ENCODE measurements at regions of chr7 and their contacts with region 1.

Region 1: DNA sequence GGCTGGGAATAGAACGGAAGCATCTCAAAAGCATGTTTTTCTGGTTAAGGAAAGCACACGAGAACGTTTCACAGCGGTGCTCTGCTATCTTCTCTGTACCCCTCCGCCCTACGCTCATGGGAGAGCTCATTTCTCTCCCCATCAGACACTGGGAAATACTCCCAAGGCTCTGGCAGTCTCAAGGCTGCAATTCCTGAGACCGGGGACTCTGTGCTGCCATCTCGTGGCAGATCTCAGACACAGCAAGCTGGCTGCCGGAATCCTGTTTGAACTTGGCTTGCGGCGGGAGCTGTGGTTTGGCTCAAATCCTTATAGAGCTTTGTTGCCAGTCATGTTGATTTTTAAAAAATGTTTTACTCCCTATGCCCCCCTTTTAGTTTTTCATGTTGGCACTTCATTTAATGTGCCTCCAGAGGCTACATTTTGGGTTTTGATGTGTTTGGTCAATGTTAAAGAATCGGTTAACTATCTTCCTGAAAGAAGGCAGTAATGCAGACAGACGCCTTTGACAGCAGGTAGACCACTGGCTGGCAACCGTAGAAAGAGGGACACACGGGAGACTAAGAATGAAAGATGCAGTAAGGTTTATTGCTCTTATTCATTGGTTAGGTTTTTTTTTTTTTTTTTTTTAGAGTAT is 27.6 kb downstream of the BMPER start:
- DNase-seq: peak; percentile 66 to 76
- ATAC-seq: peak; percentile 89 to 90
- H3K4me3 ChIP-seq: peak overlapping the region; percentile 11 to 44 (median 34)
- H3K27ac ChIP-seq: peak overlapping the region; percentile 5 to 54 (median 17)
- H3K4me1 ChIP-seq: peaks cover 10 to 11% of the 10 kb centered on the region in 2 donors
- H3K27me3 ChIP-seq: no peaks in the 10 kb centered on the region
- CTCF ChIP-seq: peak; percentile 76 to 97 (median 86)
- POLR2A ChIP-seq: no peak

Region 2: GRCh38 chr7:33243319-33243881 is 689.5 kb before region 1 on chr7:
- in situ Hi-C with region 1: loop called in 3 of 4 experiments (anchors 25 kb)
- intact Hi-C with region 1: loop called (anchors 5 kb)
- DNase-seq: no peak
- ATAC-seq: no peak
- H3K4me3 ChIP-seq: no peak overlapping the region
- H3K27ac ChIP-seq: no peak overlapping the region
- H3K4me1 ChIP-seq: no peaks in the 10 kb centered on the region
- H3K27me3 ChIP-seq: no peaks in the 10 kb centered on the region
- CTCF ChIP-seq: peak; percentile 22 to 56 (median 43)
- POLR2A ChIP-seq: no peak

Region 3: GRCh38 chr7:33423646-33424020 is 509.3 kb before region 1 on chr7:
- in situ Hi-C with region 1: loop called in 1 of 4 experiments (anchors 10 kb)
- intact Hi-C with region 1: no loop called
- DNase-seq: no peak
- ATAC-seq: no peak
- H3K4me3 ChIP-seq: no peak overlapping the region
- H3K27ac ChIP-seq: no peak overlapping the region
- H3K4me1 ChIP-seq: peaks cover 0 to 6% of the 10 kb centered on the region in 2 donors
- H3K27me3 ChIP-seq: no peaks in the 10 kb centered on the region
- CTCF ChIP-seq: peak in 4 of 5 experiments; percentile 7 to 51 (median 26)
- POLR2A ChIP-seq: no peak

Region 4: DNA sequence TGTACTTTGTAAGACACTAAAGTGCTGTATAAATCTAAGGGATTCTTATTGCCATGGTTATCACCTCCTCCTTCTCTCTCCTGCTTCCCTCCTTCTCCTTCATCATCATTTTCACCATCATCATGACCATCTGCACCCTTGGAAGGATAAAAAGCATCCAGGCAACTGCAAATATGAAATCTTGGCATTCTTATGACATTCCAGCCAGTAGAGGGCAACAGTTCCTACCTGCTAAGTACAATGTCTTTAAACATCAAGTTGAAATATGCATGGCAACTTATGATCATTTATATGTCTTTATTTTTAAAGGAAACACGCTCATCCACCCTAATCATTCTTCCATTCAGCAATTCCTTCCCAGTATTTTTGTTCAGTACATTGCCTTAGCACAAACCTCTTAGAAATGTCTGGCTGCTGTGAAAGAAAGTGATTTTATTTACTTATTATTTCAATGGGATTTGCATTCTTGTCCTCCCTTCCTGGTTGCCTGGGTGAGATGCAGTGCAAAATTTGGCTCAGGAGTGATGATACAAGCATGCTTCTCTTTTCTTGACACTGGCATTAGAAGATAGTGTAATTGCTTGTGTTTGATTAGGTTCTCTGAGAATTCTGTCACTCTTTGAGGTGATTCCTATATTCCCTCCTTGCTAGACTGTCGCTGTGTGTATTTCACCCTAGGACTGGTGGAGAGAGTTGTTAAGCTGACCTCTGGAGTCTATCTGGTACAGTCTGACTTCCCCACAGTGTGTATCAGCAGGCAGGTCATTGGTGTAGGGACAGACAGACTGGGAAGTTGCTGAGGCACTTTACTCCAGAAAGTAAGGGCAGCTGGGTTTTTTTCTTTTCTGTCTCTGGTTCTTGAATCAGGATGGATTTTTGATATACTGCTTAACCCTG is 216.1 kb before region 1 on chr7:
- in situ Hi-C with region 1: no loop called
- intact Hi-C with region 1: loop called (anchors 1 kb)
- DNase-seq: no peak
- ATAC-seq: no peak
- H3K4me3 ChIP-seq: no peak overlapping the region
- H3K27ac ChIP-seq: no peak overlapping the region
- H3K4me1 ChIP-seq: peaks cover 5 to 20% of the 10 kb centered on the region in 2 donors
- H3K27me3 ChIP-seq: no peaks in the 10 kb centered on the region
- CTCF ChIP-seq: peak; percentile 55 to 69 (median 62)
- POLR2A ChIP-seq: no peak

Region 5: GRCh38 chr7:33904681-33905388 is 28.1 kb before region 1 on chr7:
- in situ Hi-C with region 1: no loop called
- intact Hi-C with region 1: loop called (anchors 2 kb)
- DNase-seq: no peak
- ATAC-seq: peak; percentile 56 to 70
- H3K4me3 ChIP-seq: peak overlapping the region; percentile 72 to 93 (median 78)
- H3K27ac ChIP-seq: peak overlapping the region; percentile 53 to 75 (median 64)
- H3K4me1 ChIP-seq: peaks cover 0 to 12% of the 10 kb centered on the region in 2 donors
- H3K27me3 ChIP-seq: peaks cover 3 to 8% (median 6%) of the 10 kb centered on the region in 3 donors
- CTCF ChIP-seq: peak in 2 of 5 experiments; percentile 17 to 21
- POLR2A ChIP-seq: no peak

Measured in gastrocnemius medialis (tissue), 4 donors.